ENCODE measurements at regions of chr17 and their contacts with region 1.

Region 1: DNA sequence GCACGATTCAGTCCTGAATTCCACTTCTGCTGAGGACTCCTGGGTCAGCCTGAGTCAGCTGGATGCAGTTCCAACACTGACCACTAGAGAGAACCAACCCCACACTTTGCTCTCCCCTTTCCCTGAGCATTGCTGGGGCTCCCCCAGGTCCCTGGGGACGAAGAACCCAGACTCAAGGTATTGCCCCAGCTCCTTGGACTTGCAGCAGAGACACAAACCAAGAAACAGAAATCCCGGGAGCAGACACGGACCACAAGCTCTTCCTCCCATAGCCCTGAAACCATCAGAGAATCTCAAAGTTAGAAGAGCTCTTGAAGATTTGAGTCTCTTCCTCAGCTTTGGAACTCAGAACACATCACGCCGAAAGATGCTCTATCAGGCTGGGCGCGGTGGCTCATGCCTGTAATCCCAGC is 678 bp upstream of the GH1 start:
- DNase-seq: peak; percentile 75 to 81 (median 78)
- ATAC-seq: peak; percentile 96
- H3K4me3 ChIP-seq: no peak overlapping the region
- H3K27ac ChIP-seq: no peak overlapping the region
- H3K4me1 ChIP-seq: no peaks in the 10 kb centered on the region; a peak in 1 of 5 replicates
- H3K27me3 ChIP-seq: peaks cover 3 to 29% of the 10 kb centered on the region in 2 experiments; a peak in 4 of 5 replicates
- CTCF ChIP-seq: peak; percentile 88 to 92 (median 91)
- EP300 ChIP-seq: no peak
- POLR2A ChIP-seq: no peak
- RAD21 ChIP-seq: peak; percentile 87 to 94

Region 2: DNA sequence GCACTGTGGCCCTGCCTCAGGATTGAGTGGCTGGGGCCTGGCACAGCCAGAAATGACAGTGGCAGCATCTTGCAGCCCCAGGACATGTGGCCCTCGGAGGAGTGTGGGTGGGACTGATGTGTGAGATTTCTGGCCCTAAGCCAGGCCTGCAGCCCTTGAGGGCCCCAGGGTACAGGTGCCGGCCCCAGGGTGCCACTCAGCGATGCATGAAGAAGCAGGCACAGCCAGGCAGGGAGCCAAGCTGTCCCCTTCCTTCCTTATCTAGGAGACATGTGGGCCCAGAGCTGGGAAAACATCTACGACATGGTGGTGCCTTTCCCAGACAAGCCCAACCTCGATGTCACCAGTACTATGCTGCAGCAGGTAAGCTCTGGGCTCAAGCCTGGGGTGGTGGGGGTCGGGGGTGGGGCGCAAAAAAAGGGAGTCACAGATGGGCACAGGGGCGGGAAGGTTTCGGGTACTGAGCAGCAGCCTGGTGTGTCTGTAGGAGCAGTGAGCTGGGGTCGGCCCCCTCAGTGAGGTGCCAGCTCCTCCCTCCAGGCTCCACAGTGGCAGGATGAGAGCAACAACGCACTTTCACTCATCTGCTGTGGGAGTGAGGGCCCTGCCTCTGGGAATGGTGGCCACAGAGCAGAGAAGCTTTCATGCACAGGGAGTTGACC is 438.4 kb before region 1 on chr17:
- CTCF ChIA-PET with region 1: no interaction called
- POLR2A ChIA-PET with region 1: no interaction called
- in situ Hi-C with region 1: no loop called
- intact Hi-C with region 1: no loop called
- DNase-seq: no peak
- ATAC-seq: no peak
- H3K4me3 ChIP-seq: no peak overlapping the region
- H3K27ac ChIP-seq: no peak overlapping the region
- H3K4me1 ChIP-seq: peaks cover 10 to 50% of the 10 kb centered on the region in 2 experiments; a peak in 4 of 5 replicates
- H3K27me3 ChIP-seq: no peaks in the 10 kb centered on the region; a peak in 1 of 5 replicates
- CTCF ChIP-seq: no peak
- EP300 ChIP-seq: no peak
- POLR2A ChIP-seq: no peak
- RAD21 ChIP-seq: no peak

Region 3: GRCh38 chr17:63760771-63761539 is 158.4 kb before region 1 on chr17:
- CTCF ChIA-PET with region 1: no interaction called
- POLR2A ChIA-PET with region 1: no interaction called
- in situ Hi-C with region 1: no loop called
- intact Hi-C with region 1: no loop called
- DNase-seq: no peak
- ATAC-seq: no peak
- H3K4me3 ChIP-seq: no peak overlapping the region
- H3K27ac ChIP-seq: no peak overlapping the region
- H3K4me1 ChIP-seq: no peaks in the 10 kb centered on the region
- H3K27me3 ChIP-seq: no peaks in the 10 kb centered on the region
- CTCF ChIP-seq: no peak
- EP300 ChIP-seq: no peak
- POLR2A ChIP-seq: no peak
- RAD21 ChIP-seq: no peak

Region 4: DNA sequence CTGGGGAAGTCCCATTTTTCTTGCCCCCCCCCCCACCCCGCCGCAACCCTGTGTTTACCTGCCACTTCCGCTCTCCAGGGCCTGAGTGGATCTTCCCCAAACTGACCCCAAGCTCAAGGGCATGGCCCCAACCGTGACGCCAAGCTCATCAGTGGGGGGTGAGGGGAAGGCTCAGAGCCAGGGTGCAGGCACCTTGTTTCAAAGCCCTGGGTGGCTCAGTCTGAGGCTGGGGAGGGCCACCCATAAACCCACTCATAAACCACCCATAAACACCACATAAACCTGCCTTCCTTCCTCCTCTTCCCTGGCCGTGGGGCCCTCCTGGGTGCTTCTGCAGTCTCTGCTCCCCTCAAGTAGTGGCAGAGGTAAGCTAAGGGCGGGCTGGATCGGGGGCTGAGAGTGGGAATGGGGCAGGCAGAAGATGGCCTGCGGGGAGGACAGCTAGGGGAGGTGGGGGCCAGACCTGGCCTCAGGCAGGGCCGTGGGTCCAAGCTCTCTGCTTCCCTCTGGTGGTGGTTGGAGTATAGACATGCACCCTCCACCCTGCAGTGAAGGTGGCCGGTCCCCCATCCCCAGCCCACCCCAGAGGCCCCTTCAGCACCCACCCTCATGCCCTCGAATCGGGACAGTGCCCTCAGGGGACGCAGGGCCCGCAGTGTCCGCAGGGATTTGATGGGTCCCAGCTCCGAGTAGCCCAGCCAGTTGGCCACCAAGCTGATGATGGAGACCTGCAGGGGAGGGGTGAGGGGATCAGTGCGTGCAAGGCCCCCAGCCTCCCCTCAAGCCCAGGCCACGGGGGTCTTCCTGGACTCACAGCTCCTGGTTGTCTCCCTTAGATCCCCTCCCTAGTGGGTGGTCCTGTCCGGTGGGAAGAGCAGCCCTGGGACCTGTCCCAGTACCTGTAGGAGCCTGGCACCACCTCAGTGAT is 27.4 kb after region 1 on chr17:
- CTCF ChIA-PET with region 1: interaction called, 3 read pairs
- POLR2A ChIA-PET with region 1: no interaction called
- in situ Hi-C with region 1: no loop called
- intact Hi-C with region 1: loop called (anchors 2 kb)
- DNase-seq: peak; percentile 77 to 91 (median 90)
- ATAC-seq: peak; percentile 92
- H3K4me3 ChIP-seq: no peak overlapping the region
- H3K27ac ChIP-seq: no peak overlapping the region
- H3K4me1 ChIP-seq: peaks cover 3 to 30% of the 10 kb centered on the region in 2 experiments; a peak in 3 of 5 replicates
- H3K27me3 ChIP-seq: peaks cover 21 to 69% of the 10 kb centered on the region in 2 experiments; a peak in 4 of 5 replicates
- CTCF ChIP-seq: peak; percentile 61 to 82 (median 72)
- EP300 ChIP-seq: no peak
- POLR2A ChIP-seq: no peak
- RAD21 ChIP-seq: peak; percentile 34 to 63; a peak in 3 of 4 replicates

Region 5: DNA sequence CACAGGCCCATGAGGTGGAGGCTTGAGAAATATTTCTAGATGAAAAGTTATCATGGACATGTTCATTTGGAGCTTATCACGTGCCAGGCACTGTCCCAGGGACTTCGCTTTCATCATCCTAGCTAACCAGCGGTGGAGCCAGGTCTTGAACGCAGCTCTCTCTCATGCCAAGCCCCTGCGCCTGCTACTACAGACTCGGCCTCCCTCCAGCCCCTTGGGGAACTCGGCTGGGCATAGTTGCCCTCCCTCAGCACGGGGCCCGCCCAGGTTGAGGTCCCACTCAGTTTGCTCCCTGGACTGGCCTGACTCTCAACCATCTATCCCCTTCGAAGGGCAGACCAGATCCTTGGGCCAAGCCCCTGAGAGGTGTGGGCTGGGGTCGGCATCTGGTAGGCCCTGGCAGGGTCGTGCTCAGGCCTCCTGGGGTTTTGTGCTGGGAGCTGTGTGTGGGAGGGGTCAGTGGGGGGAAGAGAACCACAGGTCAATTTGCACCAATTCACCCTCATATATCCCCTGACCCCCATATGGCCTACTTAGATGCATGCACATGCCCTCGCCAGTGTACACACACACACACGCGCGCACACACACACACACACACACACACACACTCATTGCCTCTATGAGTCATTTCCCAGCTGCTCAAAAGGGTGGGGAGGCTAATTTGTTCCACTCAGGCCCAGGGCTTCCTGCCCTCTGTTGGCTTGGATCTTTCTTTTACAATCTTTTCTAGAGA is 65.5 kb after region 1 on chr17:
- CTCF ChIA-PET with region 1: interaction called, 3 read pairs
- POLR2A ChIA-PET with region 1: no interaction called
- in situ Hi-C with region 1: no loop called
- intact Hi-C with region 1: loop called (anchors 1 kb)
- DNase-seq: peak in 3 of 4 experiments; percentile 48 to 51 (median 48)
- ATAC-seq: peak; percentile 71
- H3K4me3 ChIP-seq: no peak overlapping the region
- H3K27ac ChIP-seq: no peak overlapping the region
- H3K4me1 ChIP-seq: peaks cover 7 to 28% of the 10 kb centered on the region in 2 experiments; a peak in 4 of 5 replicates
- H3K27me3 ChIP-seq: peaks cover 0 to 6% of the 10 kb centered on the region in 2 experiments; a peak in 2 of 5 replicates
- CTCF ChIP-seq: 0 out of 6 replicates have a peak, but pooled peaks of 1 of the 3 experiments have one; percentile 11
- EP300 ChIP-seq: 0 out of 2 replicates have a peak, but pooled peaks have one; percentile 15
- POLR2A ChIP-seq: no peak
- RAD21 ChIP-seq: no peak

Region 6: DNA sequence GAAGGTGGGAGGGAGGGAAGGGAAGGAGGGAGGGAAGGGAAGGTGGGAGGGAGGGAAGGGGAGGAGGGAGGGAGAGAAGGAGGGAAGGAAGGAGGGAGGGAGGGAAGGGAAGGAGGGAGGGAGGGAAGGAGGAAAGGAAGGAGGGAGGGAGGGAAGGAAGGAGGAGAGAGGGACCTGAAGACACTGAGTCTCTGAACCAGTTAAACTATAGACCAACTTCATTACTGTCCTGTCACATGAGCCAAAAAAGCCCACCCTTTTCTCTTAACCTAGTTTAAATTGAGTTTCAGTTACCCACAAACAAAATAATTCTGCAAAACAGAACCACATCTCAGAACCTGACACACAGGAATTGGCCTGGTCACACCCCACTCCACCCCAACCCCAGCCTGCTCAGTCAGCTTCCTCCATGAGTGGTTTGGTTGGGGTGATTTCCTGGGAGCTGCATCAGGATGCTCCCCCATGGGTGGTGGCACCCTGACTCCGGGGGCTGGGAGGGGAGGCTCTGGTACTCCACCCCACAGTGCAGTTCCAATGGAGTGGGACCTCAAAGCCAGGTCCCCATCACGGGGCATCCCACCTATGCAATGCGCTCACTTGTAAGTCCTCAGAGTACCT is 74.2 kb after region 1 on chr17:
- CTCF ChIA-PET with region 1: interaction called, 5 read pairs
- POLR2A ChIA-PET with region 1: no interaction called
- in situ Hi-C with region 1: no loop called
- intact Hi-C with region 1: loop called (anchors 2 kb)
- DNase-seq: no peak
- ATAC-seq: no peak
- H3K4me3 ChIP-seq: no peak overlapping the region
- H3K27ac ChIP-seq: no peak overlapping the region
- H3K4me1 ChIP-seq: peaks cover 5 to 30% of the 10 kb centered on the region in 2 experiments
- H3K27me3 ChIP-seq: peaks cover 12 to 28% of the 10 kb centered on the region in 2 experiments; a peak in 4 of 5 replicates
- CTCF ChIP-seq: no peak
- EP300 ChIP-seq: no peak
- POLR2A ChIP-seq: no peak
- RAD21 ChIP-seq: no peak

Region 7: DNA sequence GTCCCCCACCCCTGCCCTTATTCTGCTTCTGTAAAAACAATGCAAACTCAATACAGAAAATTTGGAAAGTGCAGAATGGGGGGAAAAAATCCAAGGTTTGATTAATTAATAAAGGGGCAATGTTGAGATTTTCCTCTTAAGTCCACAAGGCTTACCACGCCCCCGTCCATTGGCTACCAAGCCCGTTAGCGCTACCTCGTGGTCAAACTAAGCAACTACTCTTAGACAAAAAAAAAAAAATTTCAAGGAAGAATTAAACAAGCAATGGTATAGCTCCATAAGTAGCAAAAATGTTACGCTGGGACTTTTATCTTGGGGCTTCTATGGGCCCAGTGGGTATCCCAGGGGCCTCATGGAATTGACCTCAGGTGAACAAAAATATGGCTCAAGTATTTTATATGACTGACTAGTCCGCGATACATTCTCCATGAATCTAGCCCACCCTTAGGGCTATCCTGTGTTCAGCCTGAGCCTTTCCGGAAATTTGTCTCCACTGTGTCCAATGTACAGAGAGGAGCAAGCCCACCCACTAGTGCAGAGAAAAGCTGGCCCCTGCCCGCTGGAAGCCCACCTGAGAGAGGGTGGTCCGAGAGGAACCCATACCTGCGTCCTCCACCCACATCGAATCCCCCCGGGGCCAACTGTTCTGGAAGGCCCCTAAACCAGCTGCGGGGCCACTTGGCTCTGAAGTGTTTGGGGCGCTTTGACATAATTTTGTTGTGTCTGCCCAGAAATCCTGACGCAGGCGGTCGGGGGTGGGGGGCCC is 362.8 kb after region 1 on chr17:
- CTCF ChIA-PET with region 1: interaction called, 3 read pairs
- POLR2A ChIA-PET with region 1: interaction called, 3 read pairs
- in situ Hi-C with region 1: loop called (anchors 10 kb)
- intact Hi-C with region 1: loop called (anchors 10 kb)
- DNase-seq: peak; percentile 73 to 81 (median 80)
- ATAC-seq: peak; percentile 80
- H3K4me3 ChIP-seq: no peak overlapping the region
- H3K27ac ChIP-seq: no peak overlapping the region
- H3K4me1 ChIP-seq: peaks cover 0 to 3% of the 10 kb centered on the region in 2 experiments; a peak in 1 of 5 replicates
- H3K27me3 ChIP-seq: no peaks in the 10 kb centered on the region
- CTCF ChIP-seq: peak; percentile 79 to 92 (median 88)
- EP300 ChIP-seq: no peak
- POLR2A ChIP-seq: no peak
- RAD21 ChIP-seq: peak; percentile 84